Endothelial cell of umbilical vein (primary cell): ENCODE measurements at regions of chr4 and their contacts with region 1.

Region 1: GRCh38 chr4:150237110-150237857 is 159.0 kb downstream of the DCLK2 start:
- DNase-seq: peak; percentile 94
- H3K4me3 ChIP-seq: peak overlapping the region in 1 of 3 experiments; percentile 10
- H3K27ac ChIP-seq: peak overlapping the region; percentile 90
- H3K4me1 ChIP-seq: peaks cover 32% of the 10 kb centered on the region
- H3K27me3 ChIP-seq: no peaks in the 10 kb centered on the region
- CTCF ChIP-seq: no peak
- POLR2A ChIP-seq: no peak

Region 2: DNA sequence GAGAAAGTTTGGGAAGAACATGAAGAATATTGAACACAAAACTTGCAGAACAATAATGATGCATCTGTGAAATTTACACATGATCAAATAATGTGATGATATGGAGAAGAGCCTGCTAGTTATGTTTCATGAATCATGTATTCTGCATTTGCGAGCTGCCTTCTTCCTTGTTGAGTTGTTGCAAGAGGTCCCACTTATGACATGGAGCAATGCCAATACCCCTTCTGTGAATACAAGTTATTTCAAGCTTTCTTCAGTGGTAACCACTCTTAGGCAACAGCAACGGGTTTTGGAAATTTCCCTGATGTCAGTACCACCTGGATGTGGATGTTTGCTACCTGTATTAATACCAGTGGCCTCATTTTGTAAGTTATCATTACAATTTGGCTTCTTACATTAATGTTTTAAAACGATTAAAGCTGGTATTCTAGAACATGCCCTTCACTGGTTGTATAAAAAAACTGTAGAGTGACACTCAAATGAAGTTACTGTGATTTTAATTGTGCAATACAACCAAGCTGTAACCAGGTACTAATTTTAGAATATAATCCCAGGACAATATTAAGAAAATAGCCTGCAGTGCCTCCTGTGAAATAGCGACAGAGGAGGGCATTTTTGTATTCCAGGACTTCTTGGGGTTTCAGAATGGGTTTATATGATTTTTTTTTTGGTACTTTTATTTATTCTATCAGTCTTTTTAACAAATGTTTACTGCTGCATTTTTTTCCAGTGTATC is 446.9 kb before region 1 on chr4:
- CTCF ChIA-PET with region 1: no interaction called
- POLR2A ChIA-PET with region 1: no interaction called
- dilution Hi-C with region 1: no loop called
- intact Hi-C with region 1: no loop called
- DNase-seq: no peak
- H3K4me3 ChIP-seq: no peak overlapping the region
- H3K27ac ChIP-seq: no peak overlapping the region
- H3K4me1 ChIP-seq: no peaks in the 10 kb centered on the region
- H3K27me3 ChIP-seq: no peaks in the 10 kb centered on the region
- CTCF ChIP-seq: no peak
- POLR2A ChIP-seq: no peak

Region 3: GRCh38 chr4:150173982-150174398 is 63.3 kb before region 1 on chr4:
- CTCF ChIA-PET with region 1: no interaction called
- POLR2A ChIA-PET with region 1: no interaction called
- dilution Hi-C with region 1: no loop called
- intact Hi-C with region 1: loop called (anchors 5 kb)
- DNase-seq: peak; percentile 76
- H3K4me3 ChIP-seq: no peak overlapping the region
- H3K27ac ChIP-seq: peak overlapping the region; percentile 65
- H3K4me1 ChIP-seq: peaks cover 19% of the 10 kb centered on the region
- H3K27me3 ChIP-seq: no peaks in the 10 kb centered on the region
- CTCF ChIP-seq: no peak
- POLR2A ChIP-seq: peak; percentile 29

Region 4: GRCh38 chr4:150609101-150609500 is 371.8 kb after region 1 on chr4:
- CTCF ChIA-PET with region 1: no interaction called
- POLR2A ChIA-PET with region 1: no interaction called
- dilution Hi-C with region 1: no loop called
- intact Hi-C with region 1: no loop called
- DNase-seq: no peak
- H3K4me3 ChIP-seq: no peak overlapping the region
- H3K27ac ChIP-seq: no peak overlapping the region
- H3K4me1 ChIP-seq: no peaks in the 10 kb centered on the region
- H3K27me3 ChIP-seq: no peaks in the 10 kb centered on the region
- CTCF ChIP-seq: no peak
- POLR2A ChIP-seq: no peak